Ovary (tissue), 10 donors: ENCODE measurements at regions of chr2 and their contacts with region 1.

Region 1: GRCh38 chr2:3575534-3576262 is 638 bp downstream of the RPS7 start:
- DNase-seq: peak in 2 of 5 donors; percentile 37 to 56
- H3K4me3 ChIP-seq: peak overlapping the region; percentile 90
- H3K27ac ChIP-seq: peak overlapping the region; percentile 67 to 85
- H3K4me1 ChIP-seq: peaks cover 6% of the 10 kb centered on the region
- H3K27me3 ChIP-seq: no peaks in the 10 kb centered on the region
- CTCF ChIP-seq: no peak
- EP300 ChIP-seq: no peak
- POLR2A ChIP-seq: no peak

Region 2: DNA sequence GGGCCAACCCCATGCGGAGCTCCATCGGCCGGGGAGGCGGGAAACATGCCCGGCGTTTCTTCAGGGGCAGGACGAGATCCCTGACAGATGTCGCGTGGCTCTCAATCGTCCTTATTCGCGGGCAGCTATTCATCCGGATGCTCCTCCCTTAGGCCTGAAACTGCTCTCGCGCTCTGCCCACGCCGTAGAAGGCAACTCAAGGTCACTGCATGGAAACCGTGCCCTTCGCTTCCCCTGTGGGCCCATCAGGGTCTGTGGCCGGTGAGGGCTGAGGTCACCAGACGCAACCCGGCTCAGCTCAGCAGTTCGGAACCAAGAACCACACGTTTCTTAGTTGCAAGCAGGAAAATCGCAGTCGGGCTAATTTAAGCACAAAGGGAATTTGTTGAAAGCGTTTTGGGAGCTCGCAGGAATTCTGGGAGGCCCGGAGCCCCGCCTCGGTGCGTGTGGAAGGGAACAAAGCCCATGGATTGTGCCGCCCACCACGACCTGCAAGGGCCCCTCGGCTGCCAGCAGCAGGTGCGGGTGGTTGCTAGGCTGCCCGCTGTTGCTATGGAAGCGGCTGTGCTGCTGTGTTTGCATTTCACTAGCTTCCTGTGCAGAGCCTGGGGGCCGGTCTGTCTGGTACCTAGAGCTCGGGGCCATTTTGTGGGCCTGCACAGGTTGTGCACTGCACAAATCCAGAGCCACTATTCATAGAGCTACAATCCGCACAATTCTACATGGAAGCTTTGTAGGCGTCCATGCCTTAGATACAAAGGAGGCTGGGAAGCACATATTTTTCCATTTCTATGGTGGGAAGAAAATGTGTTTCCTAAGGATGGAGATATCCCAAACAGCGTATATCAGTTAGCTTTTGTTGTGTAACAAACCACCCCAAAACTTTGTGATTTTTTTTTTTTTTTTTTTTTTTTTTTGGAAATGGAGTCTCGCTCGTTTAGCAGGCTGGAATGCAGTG is 76.3 kb after region 1 on chr2:
- intact Hi-C with region 1: loop called in 1 of 4 experiments (anchors 5 kb)
- DNase-seq: peak; percentile 43 to 78 (median 71)
- H3K4me3 ChIP-seq: peak overlapping the region; percentile 25
- H3K27ac ChIP-seq: peak overlapping the region; percentile 35 to 89
- H3K4me1 ChIP-seq: peaks cover 8% of the 10 kb centered on the region
- H3K27me3 ChIP-seq: no peaks in the 10 kb centered on the region
- CTCF ChIP-seq: no peak
- EP300 ChIP-seq: no peak
- POLR2A ChIP-seq: no peak